ENCODE measurements at regions of chr13 and their contacts with region 1.

Region 1: GRCh38 chr13:110561344-110562035 is at the start of gene RAB20:
- DNase-seq: peak; percentile 91 to 94 (median 92)
- ATAC-seq: peak; percentile 79 to 87 (median 86)
- H3K4me3 ChIP-seq: peak within 1 kb of the TSS; percentile 68 to 96 (median 82)
- H3K27ac ChIP-seq: peak within 1 kb of the TSS; percentile 83 to 97 (median 94)
- H3K4me1 ChIP-seq: peaks cover 0 to 40% (median 19%) of the 10 kb centered on the region in 12 donors
- H3K27me3 ChIP-seq: no peaks in the 10 kb centered on the region
- CTCF ChIP-seq: no peak
- POLR2A ChIP-seq: peak in 1 of 2 donors; percentile 46
- total RNA-seq, gene RAB20: 5.5 to 30.2 (median 13.7) TPM

Region 2: GRCh38 chr13:110216398-110217041 is 345.0 kb before region 1 on chr13:
- intact Hi-C with region 1: loop called in 2 of 10 experiments (anchors 10 kb)
- DNase-seq: peak in 3 of 5 donors; percentile 37 to 56 (median 51)
- ATAC-seq: peak; percentile 61 to 68 (median 64)
- H3K4me3 ChIP-seq: no peak overlapping the region
- H3K27ac ChIP-seq: peak overlapping the region; percentile 28 to 81 (median 55)
- H3K4me1 ChIP-seq: peaks cover 6 to 72% (median 58%) of the 10 kb centered on the region in 12 donors
- H3K27me3 ChIP-seq: no peaks in the 10 kb centered on the region
- CTCF ChIP-seq: no peak
- POLR2A ChIP-seq: no peak

Region 3: GRCh38 chr13:110233181-110233950 is 328.1 kb before region 1 on chr13:
- intact Hi-C with region 1: loop called in 2 of 10 experiments (anchors 5 to 10 kb)
- DNase-seq: peak in 3 of 5 donors; percentile 61 to 68 (median 66)
- ATAC-seq: peak; percentile 16 to 59 (median 47)
- H3K4me3 ChIP-seq: peak overlapping the region in 9 of 12 donors; percentile 6 to 41 (median 19)
- H3K27ac ChIP-seq: peak overlapping the region; percentile 59 to 88 (median 78)
- H3K4me1 ChIP-seq: peaks cover 17 to 86% (median 76%) of the 10 kb centered on the region in 12 donors
- H3K27me3 ChIP-seq: no peaks in the 10 kb centered on the region
- CTCF ChIP-seq: no peak
- POLR2A ChIP-seq: no peak

Region 4: DNA sequence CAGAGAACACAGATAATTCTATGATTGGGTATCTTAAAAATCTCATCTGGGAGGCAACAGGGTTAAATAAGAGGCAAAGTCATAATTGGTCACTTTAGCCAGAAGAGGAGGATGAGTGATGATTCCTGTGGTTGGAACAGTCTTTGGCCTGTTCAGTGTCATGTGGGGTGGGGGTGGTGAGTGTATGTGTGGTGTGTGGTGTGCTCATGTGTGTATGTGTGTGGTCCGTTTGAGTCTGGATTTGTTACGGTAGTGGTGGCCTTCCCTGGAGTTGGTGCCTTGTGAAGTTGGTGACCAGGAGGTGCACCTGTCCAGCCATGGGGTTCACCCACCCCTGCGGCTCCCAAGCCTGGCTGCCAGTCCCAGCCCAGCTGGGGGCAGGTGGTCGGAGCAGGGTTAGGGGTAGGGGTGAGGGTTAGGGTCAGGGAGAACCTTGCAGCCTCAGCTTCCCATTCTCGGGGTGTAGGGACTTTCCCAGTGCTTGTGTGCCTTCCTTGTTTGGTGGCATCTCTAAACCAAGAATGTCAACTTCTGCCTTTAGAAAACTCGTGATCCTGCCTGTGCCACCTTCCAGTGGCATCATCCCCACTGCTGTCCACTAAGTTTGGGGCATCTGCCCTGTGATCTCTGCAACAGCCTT is 97.5 kb before region 1 on chr13:
- intact Hi-C with region 1: loop called in 5 of 10 experiments (anchors 5 to 10 kb)
- DNase-seq: no peak
- ATAC-seq: peak in 2 of 4 donors; percentile 14 to 33
- H3K4me3 ChIP-seq: no peak overlapping the region
- H3K27ac ChIP-seq: no peak overlapping the region
- H3K4me1 ChIP-seq: peaks cover 0 to 5% (median 0%) of the 10 kb centered on the region in 12 donors
- H3K27me3 ChIP-seq: no peaks in the 10 kb centered on the region
- CTCF ChIP-seq: no peak
- POLR2A ChIP-seq: no peak

Region 5: DNA sequence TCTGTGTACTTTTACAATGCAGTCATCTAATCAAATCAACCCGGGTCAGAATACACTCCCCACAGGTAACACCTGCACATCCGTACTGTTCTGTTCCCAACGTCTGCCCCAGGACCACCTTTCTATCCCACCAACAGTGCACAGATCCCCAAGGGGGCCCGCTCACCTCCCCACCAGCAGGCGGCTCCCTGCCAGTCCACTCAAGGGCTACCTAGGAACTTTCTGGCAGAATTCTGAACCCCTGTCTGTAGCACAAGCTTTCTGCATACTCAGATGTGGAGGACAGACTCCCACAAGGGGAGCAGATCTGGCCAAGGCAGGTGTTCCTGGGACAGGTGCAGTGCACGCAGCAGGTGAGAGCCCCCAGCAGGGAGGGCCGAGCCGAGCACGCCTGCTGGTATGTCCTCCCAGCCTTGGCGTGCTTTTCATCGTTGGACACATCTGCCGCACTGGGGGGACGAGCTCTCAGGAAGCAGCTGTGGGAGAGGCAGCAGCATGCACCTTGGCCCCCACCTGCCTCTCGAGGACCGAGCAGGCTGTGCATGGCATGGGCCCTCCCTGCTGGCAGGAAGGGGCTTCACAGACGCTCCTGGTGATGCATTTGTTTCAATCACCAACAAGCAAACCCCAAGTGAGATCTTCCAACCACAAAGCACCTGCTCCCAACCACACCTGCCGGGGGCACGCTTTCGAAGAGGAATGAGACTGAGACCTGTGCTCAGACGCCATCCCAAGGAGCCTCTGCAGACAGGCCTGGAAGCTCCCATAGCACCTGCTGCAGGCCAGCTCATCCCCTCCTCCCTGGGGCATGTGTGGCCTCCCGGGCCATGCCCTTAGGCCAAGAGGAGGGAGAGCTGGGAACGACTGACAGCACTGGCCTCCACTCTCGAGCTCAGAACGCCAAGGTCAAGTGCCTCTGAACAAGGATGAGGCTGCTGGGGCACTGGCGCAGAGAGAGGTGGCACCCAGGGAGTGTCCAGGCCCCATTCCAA is 35.9 kb before region 1 on chr13:
- intact Hi-C with region 1: loop called in 2 of 10 experiments (anchors 1 to 2 kb)
- DNase-seq: peak in 4 of 5 donors; percentile 56 to 83 (median 72)
- ATAC-seq: peak; percentile 53 to 74 (median 68)
- H3K4me3 ChIP-seq: no peak overlapping the region
- H3K27ac ChIP-seq: peak overlapping the region; percentile 69 to 94 (median 86)
- H3K4me1 ChIP-seq: peaks cover 0 to 86% (median 63%) of the 10 kb centered on the region in 12 donors
- H3K27me3 ChIP-seq: no peaks in the 10 kb centered on the region
- CTCF ChIP-seq: no peak
- POLR2A ChIP-seq: no peak

Region 6: GRCh38 chr13:110538632-110539031 is 22.9 kb before region 1 on chr13:
- intact Hi-C with region 1: no loop called
- DNase-seq: peak in 4 of 5 donors; percentile 77 to 88 (median 84)
- ATAC-seq: peak; percentile 28 to 86 (median 62)
- H3K4me3 ChIP-seq: no peak overlapping the region
- H3K27ac ChIP-seq: peak overlapping the region in 10 of 12 donors; percentile 20 to 86 (median 44)
- H3K4me1 ChIP-seq: peaks cover 5 to 85% (median 35%) of the 10 kb centered on the region in 12 donors
- H3K27me3 ChIP-seq: no peaks in the 10 kb centered on the region
- CTCF ChIP-seq: no peak
- POLR2A ChIP-seq: no peak

Measured in heart left ventricle (tissue), 16 donors.